ENCODE measurements at regions of chr15 and their contacts with region 1.

Region 1: GRCh38 chr15:20386198-20386597 is 155.4 kb downstream of the GOLGA6L6 start:
- DNase-seq: no peak
- ATAC-seq: no peak
- H3K4me3 ChIP-seq: no peak overlapping the region
- H3K4me3 Mint-ChIP-seq: no peak overlapping the region
- H3K27ac ChIP-seq: no peak overlapping the region
- H3K27ac Mint-ChIP-seq: no peak overlapping the region
- H3K4me1 ChIP-seq: no peaks in the 10 kb centered on the region
- H3K4me1 Mint-ChIP-seq: no peaks in the 10 kb centered on the region
- H3K27me3 ChIP-seq: no peaks in the 10 kb centered on the region
- H3K27me3 Mint-ChIP-seq: no peaks in the 10 kb centered on the region
- CTCF ChIP-seq: no peak

Region 2: GRCh38 chr15:20348982-20349768 is 37.0 kb before region 1 on chr15:
- CTCF ChIA-PET with region 1: no interaction called
- POLR2A ChIA-PET with region 1: no interaction called
- intact Hi-C with region 1: loop called in 1 of 2 experiments (anchors 5 kb)
- DNase-seq: peak in 7 of 9 experiments; percentile 3 to 50 (median 16)
- ATAC-seq: no peak
- H3K4me3 ChIP-seq: no peak overlapping the region
- H3K4me3 Mint-ChIP-seq: no peak overlapping the region
- H3K27ac ChIP-seq: no peak overlapping the region
- H3K27ac Mint-ChIP-seq: no peak overlapping the region
- H3K4me1 ChIP-seq: peaks cover 11% of the 10 kb centered on the region
- H3K4me1 Mint-ChIP-seq: no peaks in the 10 kb centered on the region
- H3K27me3 ChIP-seq: peaks cover 0 to 6% of the 10 kb centered on the region in 2 experiments
- H3K27me3 Mint-ChIP-seq: peaks cover 2% of the 10 kb centered on the region
- CTCF ChIP-seq: no peak

Region 3: GRCh38 chr15:20361091-20361490 is 25.1 kb before region 1 on chr15:
- CTCF ChIA-PET with region 1: no interaction called
- POLR2A ChIA-PET with region 1: no interaction called
- intact Hi-C with region 1: no loop called
- DNase-seq: no peak
- ATAC-seq: no peak
- H3K4me3 ChIP-seq: no peak overlapping the region
- H3K4me3 Mint-ChIP-seq: no peak overlapping the region
- H3K27ac ChIP-seq: no peak overlapping the region
- H3K27ac Mint-ChIP-seq: no peak overlapping the region
- H3K4me1 ChIP-seq: peaks cover 8% of the 10 kb centered on the region
- H3K4me1 Mint-ChIP-seq: peaks cover 3% of the 10 kb centered on the region
- H3K27me3 ChIP-seq: peaks cover 0 to 3% of the 10 kb centered on the region in 2 experiments
- H3K27me3 Mint-ChIP-seq: no peaks in the 10 kb centered on the region
- CTCF ChIP-seq: no peak

Region 4: GRCh38 chr15:20409247-20409646 is 23.0 kb after region 1 on chr15:
- CTCF ChIA-PET with region 1: no interaction called
- POLR2A ChIA-PET with region 1: no interaction called
- intact Hi-C with region 1: no loop called
- DNase-seq: no peak
- ATAC-seq: no peak
- H3K4me3 ChIP-seq: no peak overlapping the region
- H3K4me3 Mint-ChIP-seq: no peak overlapping the region
- H3K27ac ChIP-seq: no peak overlapping the region
- H3K27ac Mint-ChIP-seq: no peak overlapping the region
- H3K4me1 ChIP-seq: no peaks in the 10 kb centered on the region
- H3K4me1 Mint-ChIP-seq: no peaks in the 10 kb centered on the region
- H3K27me3 ChIP-seq: no peaks in the 10 kb centered on the region
- H3K27me3 Mint-ChIP-seq: peaks cover 2% of the 10 kb centered on the region
- CTCF ChIP-seq: no peak

Measured in CD8-positive, alpha-beta T cell (primary cell).